GM10248 (cell line): ENCODE measurements at regions of chr18 and their contacts with region 1.

Region 1: GRCh38 chr18:56721491-56721890 is 70.3 kb downstream of the WDR7 start:
- DNase-seq: no peak
- CTCF ChIP-seq: no peak

Region 2: GRCh38 chr18:56709463-56709862 is 12.0 kb before region 1 on chr18:
- CTCF ChIA-PET with region 1: interaction called, 10 read pairs
- POLR2A ChIA-PET with region 1: no interaction called
- DNase-seq: peak; percentile 57
- CTCF ChIP-seq: peak; percentile 9